Mammary epithelial cell (primary cell): ENCODE measurements at regions of chr11 and their contacts with region 1.

Region 1: GRCh38 chr11:69115586-69116560 is 39.9 kb upstream of the SMIM38 start:
- DNase-seq: no peak
- H3K4me3 ChIP-seq: no peak overlapping the region
- H3K27ac ChIP-seq: no peak overlapping the region
- H3K4me1 ChIP-seq: peaks cover 2% of the 10 kb centered on the region
- H3K27me3 ChIP-seq: no peaks in the 10 kb centered on the region
- CTCF ChIP-seq: no peak

Region 2: GRCh38 chr11:68904248-68904847 is 211.5 kb before region 1 on chr11:
- CTCF ChIA-PET with region 1: no interaction called
- dilution Hi-C with region 1: no loop called
- in situ Hi-C with region 1: no loop called
- intact Hi-C with region 1: no loop called
- DNase-seq: peak; percentile 43
- H3K4me3 ChIP-seq: peak overlapping the region; percentile 68 to 97 (median 71)
- H3K27ac ChIP-seq: peak overlapping the region; percentile 70
- H3K4me1 ChIP-seq: peaks cover 20% of the 10 kb centered on the region
- H3K27me3 ChIP-seq: no peaks in the 10 kb centered on the region
- CTCF ChIP-seq: no peak

Region 3: GRCh38 chr11:69055598-69056516 is 60.0 kb before region 1 on chr11:
- CTCF ChIA-PET with region 1: no interaction called
- dilution Hi-C with region 1: no loop called
- in situ Hi-C with region 1: no loop called
- intact Hi-C with region 1: no loop called
- DNase-seq: no peak
- H3K4me3 ChIP-seq: no peak overlapping the region
- H3K27ac ChIP-seq: no peak overlapping the region
- H3K4me1 ChIP-seq: no peaks in the 10 kb centered on the region
- H3K27me3 ChIP-seq: no peaks in the 10 kb centered on the region
- CTCF ChIP-seq: no peak

Region 4: GRCh38 chr11:69192301-69192721 is 76.4 kb after region 1 on chr11:
- CTCF ChIA-PET with region 1: no interaction called
- dilution Hi-C with region 1: no loop called
- in situ Hi-C with region 1: no loop called
- intact Hi-C with region 1: no loop called
- DNase-seq: no peak
- H3K4me3 ChIP-seq: no peak overlapping the region
- H3K27ac ChIP-seq: no peak overlapping the region
- H3K4me1 ChIP-seq: no peaks in the 10 kb centered on the region
- H3K27me3 ChIP-seq: no peaks in the 10 kb centered on the region
- CTCF ChIP-seq: no peak

Region 5: DNA sequence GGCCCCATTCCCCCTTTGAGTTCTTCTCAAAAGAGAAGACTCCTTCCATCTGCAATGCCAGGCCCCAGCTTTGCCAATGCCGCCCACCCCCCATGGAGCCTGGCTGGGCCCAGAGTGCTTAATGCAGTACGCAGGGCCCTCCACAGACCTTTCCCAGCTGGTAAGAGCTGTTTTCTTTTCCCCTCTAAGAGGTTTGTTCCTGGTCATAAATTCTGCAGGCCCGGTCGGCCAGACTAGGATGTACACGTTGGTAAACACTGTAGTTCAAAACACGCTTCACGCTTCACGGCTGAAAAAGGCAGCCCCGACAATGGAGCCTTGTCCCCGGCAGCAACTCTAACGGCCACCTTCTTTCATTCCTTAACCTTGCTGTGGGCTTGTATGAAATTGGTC is 117.9 kb after region 1 on chr11:
- CTCF ChIA-PET with region 1: no interaction called
- dilution Hi-C with region 1: loop called (anchors 5 kb)
- in situ Hi-C with region 1: no loop called
- intact Hi-C with region 1: no loop called
- DNase-seq: no peak
- H3K4me3 ChIP-seq: no peak overlapping the region
- H3K27ac ChIP-seq: no peak overlapping the region
- H3K4me1 ChIP-seq: no peaks in the 10 kb centered on the region
- H3K27me3 ChIP-seq: no peaks in the 10 kb centered on the region
- CTCF ChIP-seq: no peak

Region 6: DNA sequence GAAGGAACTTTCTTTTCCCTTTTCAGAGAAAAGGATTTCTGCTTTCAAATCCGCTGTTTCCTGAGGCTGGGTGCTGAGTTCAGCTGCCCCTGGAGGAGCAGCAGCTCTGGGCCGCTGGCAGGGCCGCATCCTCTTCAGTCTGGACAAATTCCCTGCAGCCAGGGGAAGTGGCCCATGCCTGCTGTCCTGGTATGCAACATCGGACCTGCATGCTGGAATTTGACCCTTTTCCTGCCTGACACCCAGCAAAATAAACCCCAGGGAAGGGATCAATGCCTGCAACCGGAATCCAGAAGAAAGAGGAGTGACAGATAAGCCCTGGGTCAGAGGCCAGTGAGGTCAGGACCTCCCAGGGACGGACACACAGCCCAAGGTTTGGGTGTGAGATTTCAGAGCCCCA is 311.5 kb after region 1 on chr11:
- CTCF ChIA-PET with region 1: no interaction called
- dilution Hi-C with region 1: loop called (anchors 10 kb)
- in situ Hi-C with region 1: loop called in 1 of 2 experiments (anchors 25 kb)
- intact Hi-C with region 1: no loop called
- DNase-seq: no peak
- H3K4me3 ChIP-seq: no peak overlapping the region
- H3K27ac ChIP-seq: no peak overlapping the region
- H3K4me1 ChIP-seq: peaks cover 1% of the 10 kb centered on the region
- H3K27me3 ChIP-seq: no peaks in the 10 kb centered on the region
- CTCF ChIP-seq: no peak

Region 7: GRCh38 chr11:69654569-69655327 is 538.9 kb after region 1 on chr11:
- CTCF ChIA-PET with region 1: no interaction called
- dilution Hi-C with region 1: loop called (anchors 10 kb)
- in situ Hi-C with region 1: no loop called
- intact Hi-C with region 1: no loop called
- DNase-seq: no peak
- H3K4me3 ChIP-seq: no peak overlapping the region
- H3K27ac ChIP-seq: no peak overlapping the region
- H3K4me1 ChIP-seq: no peaks in the 10 kb centered on the region
- H3K27me3 ChIP-seq: no peaks in the 10 kb centered on the region
- CTCF ChIP-seq: no peak

Region 8: DNA sequence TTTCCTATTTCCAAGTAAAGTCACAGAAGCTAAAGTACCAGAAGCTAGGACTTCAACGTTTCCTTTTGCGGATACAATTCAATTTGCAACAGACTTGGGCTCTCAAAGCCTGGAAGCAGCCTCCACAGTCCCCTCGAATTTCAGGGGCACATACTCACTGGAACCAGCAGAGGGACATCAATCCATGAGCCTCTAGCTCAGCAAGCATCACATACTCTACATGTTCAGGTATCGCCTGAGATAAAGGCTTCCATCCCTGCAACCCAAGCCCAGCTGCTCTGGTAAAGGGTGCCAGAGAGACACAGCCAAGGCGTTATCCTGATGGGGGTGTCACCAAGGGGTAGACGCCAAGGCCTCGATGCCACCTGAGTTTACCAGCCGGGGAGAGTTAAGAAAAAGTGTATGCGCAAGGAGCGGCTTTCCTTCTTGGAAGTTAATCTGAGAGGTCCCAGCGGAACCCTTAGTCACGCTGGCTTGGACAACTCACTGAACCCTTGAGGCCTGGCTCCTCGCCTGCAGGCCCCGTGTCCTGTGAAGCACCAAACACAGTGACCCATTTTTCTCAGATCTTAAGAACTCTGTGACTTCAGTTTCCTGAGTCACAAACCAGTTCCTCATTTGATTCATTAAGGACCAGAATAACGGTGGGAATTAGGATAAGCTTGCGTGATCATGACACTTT is 546.3 kb after region 1 on chr11:
- CTCF ChIA-PET with region 1: no interaction called
- dilution Hi-C with region 1: loop called (anchors 10 kb)
- in situ Hi-C with region 1: loop called in 1 of 2 experiments (anchors 10 kb)
- intact Hi-C with region 1: no loop called
- DNase-seq: no peak
- H3K4me3 ChIP-seq: no peak overlapping the region
- H3K27ac ChIP-seq: no peak overlapping the region
- H3K4me1 ChIP-seq: no peaks in the 10 kb centered on the region
- H3K27me3 ChIP-seq: no peaks in the 10 kb centered on the region
- CTCF ChIP-seq: peak; percentile 23 to 34